SK-N-SH (cell line): ENCODE measurements at regions of chr2 and their contacts with region 1.

Region 1: GRCh38 chr2:151238527-151239487 is 22.9 kb downstream of the RBM43 start:
- DNase-seq: peak; percentile 71
- H3K4me3 ChIP-seq: peak overlapping the region in 1 of 2 experiments; percentile 2; a peak in 1 of 4 replicates
- H3K27ac ChIP-seq: peak overlapping the region in 1 of 2 experiments; percentile 73; a peak in 2 of 4 replicates
- H3K4me1 ChIP-seq: peaks cover 4 to 12% of the 10 kb centered on the region in 2 experiments; a peak in 3 of 4 replicates
- H3K27me3 ChIP-seq: no peaks in the 10 kb centered on the region
- CTCF ChIP-seq: peak; percentile 89
- EP300 ChIP-seq: no peak
- RAD21 ChIP-seq: peak; percentile 100

Region 2: DNA sequence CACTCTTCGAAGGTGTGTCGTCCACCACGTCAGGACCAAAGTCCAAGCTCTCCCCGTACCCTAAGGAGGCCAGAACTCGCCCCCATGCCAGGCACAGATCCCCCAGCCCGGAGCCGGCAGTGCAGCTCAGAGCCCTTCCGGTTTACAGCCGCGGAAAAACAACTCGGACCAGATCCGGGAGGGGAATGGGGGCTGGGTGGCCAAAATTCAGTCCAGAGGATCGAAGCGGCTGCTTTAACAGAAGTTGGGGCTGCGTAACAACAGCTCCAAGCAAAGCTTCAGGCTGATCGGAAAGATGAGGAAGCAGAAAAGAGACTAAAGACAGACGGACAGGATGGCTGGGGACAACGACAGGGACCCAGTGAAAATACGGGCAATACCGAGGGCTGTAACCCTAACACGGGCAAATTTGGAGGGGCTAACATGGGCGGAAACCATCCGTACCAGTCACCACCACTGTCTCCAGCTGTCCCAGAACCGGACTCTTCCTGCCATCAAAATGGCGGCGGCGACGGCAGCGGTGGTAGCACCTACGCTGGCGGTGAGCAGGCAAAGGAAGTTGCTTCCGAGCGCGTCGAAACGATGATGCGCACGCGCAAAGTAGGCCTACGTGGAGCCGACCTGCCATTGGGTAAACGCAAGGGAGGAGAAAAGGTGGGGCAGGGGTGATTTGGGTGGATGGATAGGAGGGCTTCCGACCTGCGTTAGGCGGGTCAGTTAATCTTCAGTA is 1651.4 kb before region 1 on chr2 and contains the start of gene MMADHC:
- CTCF ChIA-PET with region 1: interaction called, 18 read pairs
- POLR2A ChIA-PET with region 1: no interaction called
- DNase-seq: peak; percentile 84
- H3K4me3 ChIP-seq: peak within 1 kb of the TSS; percentile 63 to 85
- H3K27ac ChIP-seq: peak within 1 kb of the TSS; percentile 95 to 97
- H3K4me1 ChIP-seq: peaks cover 5 to 19% of the 10 kb centered on the region in 2 experiments; a peak in 3 of 4 replicates
- H3K27me3 ChIP-seq: no peaks in the 10 kb centered on the region
- CTCF ChIP-seq: no peak
- EP300 ChIP-seq: no peak
- RAD21 ChIP-seq: no peak
- polyA plus RNA-seq, gene MMADHC: 40.4 and 45.1 TPM in 2 replicates

Region 3: DNA sequence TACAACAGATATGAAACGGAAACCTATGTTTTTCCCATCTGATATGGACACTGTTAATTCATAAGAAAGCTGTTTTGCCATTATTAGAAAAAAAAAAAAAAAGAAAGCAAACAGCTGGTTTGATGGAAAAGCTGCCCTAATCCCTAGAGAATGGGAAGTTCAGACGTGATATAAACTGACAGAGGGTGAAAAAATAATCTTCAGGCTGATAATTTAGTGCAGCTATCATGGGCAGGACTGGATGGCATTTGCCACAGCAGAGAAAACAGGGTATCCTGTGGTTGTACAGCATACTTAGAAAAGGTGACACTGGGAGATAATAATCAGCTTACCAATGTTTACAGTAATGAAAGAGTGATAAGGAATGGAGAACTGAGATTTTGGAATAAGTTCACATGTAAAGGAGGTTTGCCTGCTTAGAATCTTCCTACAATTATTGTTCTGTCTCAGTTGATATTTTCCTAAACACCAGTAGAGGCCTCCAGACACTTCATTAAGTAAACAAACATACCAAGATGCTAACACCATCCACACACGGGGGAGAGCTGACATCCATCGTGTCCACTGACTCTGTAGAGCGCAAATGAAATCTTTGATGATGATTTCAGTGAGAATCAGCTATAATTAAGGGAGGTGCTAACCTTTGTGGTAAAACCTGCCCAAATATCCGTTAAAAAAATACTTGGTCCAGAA is 1439.6 kb before region 1 on chr2:
- CTCF ChIA-PET with region 1: interaction called, 36 read pairs
- POLR2A ChIA-PET with region 1: no interaction called
- DNase-seq: peak; percentile 23
- H3K4me3 ChIP-seq: no peak overlapping the region
- H3K27ac ChIP-seq: no peak overlapping the region
- H3K4me1 ChIP-seq: peaks cover 0 to 6% of the 10 kb centered on the region in 2 experiments; a peak in 2 of 4 replicates
- H3K27me3 ChIP-seq: no peaks in the 10 kb centered on the region
- CTCF ChIP-seq: no peak
- EP300 ChIP-seq: no peak
- RAD21 ChIP-seq: peak; percentile 83

Region 4: GRCh38 chr2:150997702-150998440 is 240.9 kb before region 1 on chr2:
- CTCF ChIA-PET with region 1: interaction called, 22 read pairs
- POLR2A ChIA-PET with region 1: no interaction called
- DNase-seq: peak; percentile 65
- H3K4me3 ChIP-seq: no peak overlapping the region
- H3K27ac ChIP-seq: peak overlapping the region; percentile 40 to 100; a peak in 3 of 4 replicates
- H3K4me1 ChIP-seq: peaks cover 0 to 24% of the 10 kb centered on the region in 2 experiments; a peak in 2 of 4 replicates
- H3K27me3 ChIP-seq: no peaks in the 10 kb centered on the region
- CTCF ChIP-seq: no peak
- EP300 ChIP-seq: peak; percentile 68 to 99; a peak in 3 of 4 replicates
- RAD21 ChIP-seq: peak; percentile 36

Region 5: DNA sequence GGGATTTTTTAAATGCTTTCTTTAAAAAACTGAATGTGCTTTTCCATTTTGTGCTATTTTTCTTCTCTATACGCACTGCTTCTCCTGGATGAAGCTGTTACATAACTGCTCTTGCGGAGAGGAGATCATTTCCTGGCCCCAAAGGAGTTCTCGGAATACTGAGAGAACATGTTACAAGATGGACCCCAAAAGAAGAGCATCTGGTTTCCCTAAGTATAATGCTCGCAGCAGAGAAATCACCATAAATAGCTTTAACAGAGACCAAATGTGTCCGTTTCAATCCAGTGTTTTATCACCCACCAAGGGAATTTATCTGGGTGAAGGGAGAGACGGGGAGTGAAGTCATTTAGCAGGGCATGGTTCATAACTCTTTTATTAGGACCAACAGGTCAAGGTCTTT is 57.3 kb before region 1 on chr2:
- CTCF ChIA-PET with region 1: no interaction called
- POLR2A ChIA-PET with region 1: no interaction called
- DNase-seq: no peak
- H3K4me3 ChIP-seq: no peak overlapping the region
- H3K27ac ChIP-seq: no peak overlapping the region
- H3K4me1 ChIP-seq: peaks cover 0 to 3% of the 10 kb centered on the region in 2 experiments; a peak in 1 of 4 replicates
- H3K27me3 ChIP-seq: peaks cover 7% of the 10 kb centered on the region
- CTCF ChIP-seq: no peak
- EP300 ChIP-seq: no peak
- RAD21 ChIP-seq: no peak

Region 6: DNA sequence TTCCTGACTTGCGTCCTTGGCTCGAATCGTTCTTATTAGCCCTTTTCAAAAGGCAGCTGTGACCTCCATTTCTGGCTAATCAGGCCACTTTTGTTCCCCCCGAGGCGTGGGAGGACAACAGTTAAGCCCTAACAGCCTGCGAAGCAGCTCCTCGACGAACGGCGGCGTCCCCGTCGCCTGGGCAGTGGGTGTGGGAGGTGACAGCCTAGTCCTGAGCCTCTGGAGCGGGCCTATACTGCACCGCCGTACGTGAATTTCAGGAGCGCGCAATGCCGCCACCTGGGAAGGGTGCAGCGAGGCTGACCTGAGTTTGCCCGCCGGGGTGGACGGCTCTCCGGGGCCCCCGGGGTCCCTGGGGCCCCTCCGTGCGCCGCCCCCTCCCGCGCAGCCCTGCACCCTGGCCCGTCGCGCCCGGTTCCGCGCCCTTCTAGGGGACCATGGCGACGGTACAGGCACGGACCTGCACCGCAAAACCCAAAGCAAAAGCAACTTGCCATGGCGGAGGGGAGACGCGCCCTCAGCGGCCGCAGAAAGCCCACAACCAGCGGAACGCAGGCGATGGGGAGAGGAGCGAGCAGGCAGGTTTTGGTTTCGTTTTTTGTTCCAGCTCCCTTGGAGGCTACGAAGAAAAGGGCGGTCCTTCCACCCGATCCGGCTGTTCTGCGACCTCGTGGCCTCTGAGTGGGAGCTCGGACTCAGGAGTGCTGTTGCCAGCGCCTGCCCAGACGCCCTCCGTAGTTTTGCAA is 22.6 kb after region 1 on chr2 and contains the start of gene RBM43:
- CTCF ChIA-PET with region 1: interaction called, 12 read pairs
- POLR2A ChIA-PET with region 1: no interaction called
- DNase-seq: peak; percentile 90
- H3K4me3 ChIP-seq: peak within 1 kb of the TSS; percentile 69 to 74
- H3K27ac ChIP-seq: peak within 1 kb of the TSS; percentile 88 to 92
- H3K4me1 ChIP-seq: peaks cover 3 to 4% of the 10 kb centered on the region in 2 experiments; a peak in 3 of 4 replicates
- H3K27me3 ChIP-seq: no peaks in the 10 kb centered on the region
- CTCF ChIP-seq: no peak
- EP300 ChIP-seq: no peak
- RAD21 ChIP-seq: peak; percentile 21
- polyA plus RNA-seq, gene RBM43: 2.0 and 2.1 TPM in 2 replicates